Esophagus muscularis mucosa (tissue), 4 donors: ENCODE measurements at regions of chr3 and their contacts with region 1.

Region 1: GRCh38 chr3:148991194-148992026 is at the start of gene GYG1:
- DNase-seq: peak; percentile 93
- H3K4me3 ChIP-seq: peak within 1 kb of the TSS; percentile 92 to 99 (median 95)
- H3K27ac ChIP-seq: peak within 1 kb of the TSS; percentile 98 to 100 (median 99)
- H3K4me1 ChIP-seq: peaks cover 17 to 42% (median 37%) of the 10 kb centered on the region in 4 donors
- H3K27me3 ChIP-seq: no peaks in the 10 kb centered on the region
- CTCF ChIP-seq: peak; percentile 31 to 36 (median 32)
- EP300 ChIP-seq: no peak
- POLR2A ChIP-seq: peak; percentile 69
- total RNA-seq, gene GYG1: 101 to 177 (median 141) TPM

Region 2: DNA sequence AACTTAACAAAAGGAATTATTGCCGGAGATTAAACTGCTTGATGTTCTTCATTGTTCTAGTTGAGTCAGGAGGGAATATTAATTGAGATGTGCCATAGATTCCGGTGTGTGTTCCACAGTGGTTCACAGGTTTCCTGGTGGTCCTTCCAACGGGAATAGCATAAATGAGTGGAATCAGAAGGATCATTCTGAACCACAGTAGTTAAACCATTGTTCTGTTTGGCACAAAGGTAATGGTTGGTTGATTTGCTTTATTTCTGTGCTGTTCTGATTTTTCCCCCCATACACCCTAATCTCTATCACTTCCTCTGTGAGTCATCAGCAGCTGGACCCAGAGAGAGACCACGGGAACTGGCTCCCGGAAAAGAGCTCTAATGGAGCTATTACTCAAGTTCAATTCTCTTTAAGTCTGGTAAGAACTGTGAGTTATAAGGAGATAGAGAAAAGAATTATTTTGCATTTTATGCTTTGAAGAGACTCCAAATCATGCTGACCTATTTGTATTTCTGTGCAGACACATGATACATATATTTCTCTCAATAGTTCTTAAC is 955.0 kb before region 1 on chr3:
- intact Hi-C with region 1: no loop called
- DNase-seq: no peak
- H3K4me3 ChIP-seq: no peak overlapping the region
- H3K27ac ChIP-seq: no peak overlapping the region
- H3K4me1 ChIP-seq: no peaks in the 10 kb centered on the region
- H3K27me3 ChIP-seq: no peaks in the 10 kb centered on the region
- CTCF ChIP-seq: no peak
- EP300 ChIP-seq: no peak
- POLR2A ChIP-seq: no peak

Region 3: DNA sequence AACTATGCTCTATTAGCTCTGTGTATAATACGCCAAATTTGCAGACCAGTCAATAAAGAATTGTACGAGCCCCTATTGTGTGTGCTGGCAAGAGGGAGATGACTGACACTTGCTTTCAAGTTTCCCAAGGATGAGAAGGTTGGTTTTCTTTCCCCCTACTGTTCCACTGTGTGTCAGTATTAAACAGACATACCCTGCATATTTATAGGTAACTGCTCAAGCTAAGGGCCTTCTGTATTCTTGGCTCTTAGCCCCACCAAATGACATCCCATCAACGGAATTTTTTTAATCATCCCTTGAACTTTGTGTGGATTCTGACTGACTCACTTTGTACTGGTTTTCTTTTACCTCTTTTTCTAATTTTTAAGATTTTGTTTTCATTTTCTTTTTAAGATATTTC is 60.7 kb before region 1 on chr3:
- intact Hi-C with region 1: no loop called
- DNase-seq: no peak
- H3K4me3 ChIP-seq: no peak overlapping the region
- H3K27ac ChIP-seq: no peak overlapping the region
- H3K4me1 ChIP-seq: no peaks in the 10 kb centered on the region
- H3K27me3 ChIP-seq: no peaks in the 10 kb centered on the region
- CTCF ChIP-seq: no peak
- EP300 ChIP-seq: no peak
- POLR2A ChIP-seq: no peak

Region 4: GRCh38 chr3:149086232-149086988 is 95.0 kb after region 1 on chr3 and contains the start of gene HLTF:
- intact Hi-C with region 1: loop called (anchors 10 kb)
- DNase-seq: peak; percentile 97
- H3K4me3 ChIP-seq: peak within 1 kb of the TSS; percentile 66 to 85 (median 78)
- H3K27ac ChIP-seq: peak within 1 kb of the TSS; percentile 69 to 85 (median 82)
- H3K4me1 ChIP-seq: peaks cover 6 to 22% (median 15%) of the 10 kb centered on the region in 4 donors
- H3K27me3 ChIP-seq: no peaks in the 10 kb centered on the region
- CTCF ChIP-seq: no peak
- EP300 ChIP-seq: no peak
- POLR2A ChIP-seq: no peak
- total RNA-seq, gene HLTF: 13.3 to 26.2 (median 19.4) TPM